ENCODE measurements at regions of chr4 and their contacts with region 1.

Region 1: GRCh38 chr4:185965426-185966384 is 103.3 kb upstream of the TLR3 start:
- DNase-seq: peak in 1 of 2 experiments; percentile 21
- H3K4me3 ChIP-seq: no peak overlapping the region
- H3K27ac ChIP-seq: peak overlapping the region; percentile 78; the same call in 1 of the 2 replicates
- H3K4me1 ChIP-seq: peaks cover 25% of the 10 kb centered on the region
- H3K27me3 ChIP-seq: no peaks in the 10 kb centered on the region
- CTCF ChIP-seq: no peak

Region 2: GRCh38 chr4:185513489-185514181 is 452.1 kb before region 1 on chr4:
- CTCF ChIA-PET with region 1: no interaction called
- POLR2A ChIA-PET with region 1: no interaction called
- intact Hi-C with region 1: no loop called
- DNase-seq: no peak
- H3K4me3 ChIP-seq: no peak overlapping the region
- H3K27ac ChIP-seq: no peak overlapping the region
- H3K4me1 ChIP-seq: peaks cover 2% of the 10 kb centered on the region
- H3K27me3 ChIP-seq: no peaks in the 10 kb centered on the region
- CTCF ChIP-seq: no peak

Region 3: DNA sequence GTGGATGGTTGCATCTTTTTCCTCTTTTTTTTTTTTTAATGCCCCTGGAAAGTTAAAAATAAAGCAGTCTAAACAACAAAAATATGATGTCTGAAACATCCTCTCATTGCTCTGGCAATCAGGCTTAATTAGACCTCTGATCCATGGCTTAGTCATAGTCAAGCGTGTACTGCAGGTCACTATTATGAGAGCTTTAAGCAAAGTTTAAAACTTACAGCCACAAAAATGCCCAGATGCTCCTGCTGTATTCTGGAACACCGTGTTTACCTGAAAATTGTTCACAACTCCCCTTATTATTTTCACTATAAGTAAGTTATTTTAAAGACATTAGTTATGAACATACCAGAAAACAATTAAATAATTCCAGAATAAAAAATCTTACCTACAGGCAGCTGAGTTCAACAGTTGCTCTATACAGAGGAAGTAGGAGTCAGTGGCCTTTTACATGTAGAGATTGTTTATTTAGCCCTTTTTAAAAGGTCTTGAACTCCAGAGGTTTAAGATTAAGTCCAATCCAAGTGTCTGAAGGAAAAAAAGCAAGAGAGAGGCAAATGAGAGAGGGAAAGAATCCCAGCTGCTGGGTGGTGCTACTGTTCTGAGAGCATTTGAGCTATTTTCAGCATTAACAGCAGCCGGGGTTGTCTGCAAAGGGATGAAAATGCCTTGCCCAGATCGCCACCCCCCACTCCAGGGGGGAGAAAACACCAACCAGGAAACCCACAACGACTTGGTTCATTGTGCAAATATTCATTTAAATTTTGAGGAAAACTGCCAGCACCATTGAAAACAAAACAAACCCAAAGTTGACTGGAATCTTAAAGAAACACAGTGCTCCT is 190.6 kb before region 1 on chr4:
- CTCF ChIA-PET with region 1: no interaction called
- POLR2A ChIA-PET with region 1: no interaction called
- intact Hi-C with region 1: loop called (anchors 5 kb)
- DNase-seq: peak in 1 of 2 experiments; percentile 45
- H3K4me3 ChIP-seq: no peak overlapping the region
- H3K27ac ChIP-seq: peak overlapping the region; percentile 62
- H3K4me1 ChIP-seq: peaks cover 20% of the 10 kb centered on the region
- H3K27me3 ChIP-seq: no peaks in the 10 kb centered on the region
- CTCF ChIP-seq: no peak

Measured in PC-9 (cell line).